ENCODE measurements at regions of chr6 and their contacts with region 1.

Region 1: DNA sequence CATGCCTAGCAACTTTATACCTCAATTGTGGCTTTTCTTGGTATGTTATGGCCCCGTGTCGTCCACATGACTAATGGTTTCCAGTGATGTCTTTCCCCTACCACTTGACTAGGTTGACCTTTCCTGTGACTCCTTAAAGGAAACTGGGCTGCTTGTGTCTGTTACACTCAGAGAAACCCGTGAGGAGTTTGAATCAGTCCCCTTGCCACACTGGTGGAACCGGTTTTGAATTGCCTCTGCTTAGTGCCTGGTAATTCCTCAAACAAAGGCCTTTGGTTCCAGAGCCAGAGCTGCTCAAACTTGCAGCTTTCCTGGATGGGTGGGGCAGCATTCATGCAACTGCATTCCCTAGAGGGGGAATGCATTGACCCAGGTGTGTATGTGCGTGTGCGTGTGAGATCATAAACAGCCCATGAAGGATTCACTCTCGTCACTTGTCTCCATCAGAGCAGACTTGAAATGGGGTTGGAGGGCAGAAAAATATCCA is 22.0 kb downstream of the ECT2L start:
- DNase-seq: no peak
- H3K4me3 ChIP-seq: no peak overlapping the region
- H3K27ac ChIP-seq: no peak overlapping the region
- H3K4me1 ChIP-seq: no peaks in the 10 kb centered on the region
- H3K27me3 ChIP-seq: no peaks in the 10 kb centered on the region
- CTCF ChIP-seq: no peak

Region 2: GRCh38 chr6:138863321-138863720 is 45.5 kb after region 1 on chr6:
- intact Hi-C with region 1: no loop called
- DNase-seq: no peak
- H3K4me3 ChIP-seq: no peak overlapping the region
- H3K27ac ChIP-seq: peak overlapping the region; percentile 19 to 41
- H3K4me1 ChIP-seq: peaks cover 0 to 20% (median 3%) of the 10 kb centered on the region in 4 donors
- H3K27me3 ChIP-seq: no peaks in the 10 kb centered on the region
- CTCF ChIP-seq: no peak

Region 3: DNA sequence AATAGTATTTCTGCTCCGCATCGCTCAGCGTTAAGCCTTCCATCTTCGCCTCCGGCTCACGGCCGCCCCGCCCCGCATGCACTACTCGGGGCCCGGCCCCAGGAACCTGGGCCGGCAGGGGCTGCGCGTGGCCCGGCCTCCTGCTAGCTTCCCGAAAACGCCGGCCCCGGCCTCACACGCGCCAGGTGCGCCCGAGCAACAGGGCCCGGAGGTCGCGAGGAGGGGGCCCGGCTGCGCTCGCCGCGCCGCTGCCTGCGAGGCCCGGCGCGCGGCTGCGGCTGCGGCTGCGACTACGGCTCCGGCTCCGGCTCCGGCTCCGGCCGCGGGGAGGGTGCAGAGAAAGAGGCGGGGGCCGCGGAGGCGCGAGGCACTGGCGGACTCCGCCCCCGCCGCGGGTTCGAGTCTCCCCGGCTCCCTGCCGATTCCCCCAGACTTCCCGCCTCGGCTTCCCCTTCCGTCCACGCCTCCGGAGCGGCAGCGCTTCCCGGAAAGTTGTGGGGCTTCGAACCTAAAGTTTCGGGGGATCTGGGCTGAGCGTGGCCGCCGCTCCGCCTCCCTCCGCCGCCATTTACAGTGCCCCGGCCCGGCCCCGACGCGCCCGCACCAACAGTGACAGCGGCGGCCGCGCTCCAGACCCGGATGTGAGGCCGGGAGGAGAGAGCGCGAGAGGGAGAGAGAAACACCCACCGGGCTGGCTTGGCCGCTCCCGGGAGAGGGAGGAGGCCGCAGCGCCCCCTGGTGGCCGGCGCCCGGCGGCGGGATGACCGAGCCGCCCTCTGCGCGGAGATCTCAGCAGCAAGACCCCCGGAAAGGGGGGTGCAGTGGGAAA is 170.0 kb after region 1 on chr6 and contains the start of gene REPS1:
- intact Hi-C with region 1: loop called (anchors 5 kb)
- DNase-seq: peak; percentile 93 to 95
- H3K4me3 ChIP-seq: peak within 1 kb of the TSS; percentile 86 to 98
- H3K27ac ChIP-seq: peak within 1 kb of the TSS; percentile 86 to 88
- H3K4me1 ChIP-seq: peaks cover 0 to 42% (median 26%) of the 10 kb centered on the region in 4 donors
- H3K27me3 ChIP-seq: no peaks in the 10 kb centered on the region
- CTCF ChIP-seq: peak; percentile 95 to 98

Region 4: GRCh38 chr6:139364302-139364981 is 546.6 kb after region 1 on chr6:
- intact Hi-C with region 1: loop called (anchors 5 kb)
- DNase-seq: no peak
- H3K4me3 ChIP-seq: no peak overlapping the region
- H3K27ac ChIP-seq: no peak overlapping the region
- H3K4me1 ChIP-seq: peaks cover 0 to 20% (median 8%) of the 10 kb centered on the region in 4 donors
- H3K27me3 ChIP-seq: no peaks in the 10 kb centered on the region
- CTCF ChIP-seq: peak; percentile 66 to 88

Measured in tibial artery (tissue), 4 donors.